ENCODE measurements at regions of chr2 and their contacts with region 1.

Region 1: GRCh38 chr2:224650815-224651439 is 65.2 kb downstream of the CCDC195 start:
- DNase-seq: peak; percentile 10
- H3K4me3 ChIP-seq: no peak overlapping the region
- CTCF ChIP-seq: peak; percentile 69

Region 2: DNA sequence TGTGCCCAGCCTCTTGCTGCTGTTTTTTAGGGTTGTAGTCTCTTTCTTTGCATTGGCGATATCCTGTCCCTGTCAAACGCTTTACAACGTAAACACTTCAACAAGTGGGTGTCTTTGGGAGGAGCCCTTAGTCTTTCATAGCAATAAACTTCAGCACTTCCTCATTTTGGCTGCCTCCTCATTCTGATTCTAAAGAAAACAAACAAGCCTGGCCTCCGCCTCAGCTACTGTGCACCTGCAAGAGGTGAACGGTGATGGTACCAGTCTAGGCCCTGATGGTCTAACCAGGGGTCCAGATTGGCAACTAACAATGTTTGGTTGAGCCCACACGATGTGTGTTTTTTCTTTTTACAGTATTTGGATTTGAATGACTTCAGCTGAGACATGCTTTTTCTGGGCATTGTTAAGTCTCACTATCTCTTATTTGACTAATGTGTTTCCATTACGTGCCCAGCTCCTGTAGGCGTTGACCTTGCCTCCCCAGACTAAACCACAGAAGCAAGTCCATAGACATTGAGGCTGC is 12.6 kb before region 1 on chr2:
- CTCF ChIA-PET with region 1: interaction called, 23 read pairs
- POLR2A ChIA-PET with region 1: no interaction called
- DNase-seq: no peak
- H3K4me3 ChIP-seq: no peak overlapping the region
- CTCF ChIP-seq: no peak